Activated T-helper 1 cell treated with anti-CD3 and anti-CD28 coated beads, Interleukin-12 subunit alpha, Interleukin-12 subunit beta, Interleukin-2, Interleukin-4 antibody, amounts not matched to agents 30 ng/mL and 10 ng/mL and 1 ng/mL, durations not matched to agents 14 hours and 24 hours and 36 hours (primary cell): ENCODE measurements at regions of chr4 and their contacts with region 1.

Region 1: DNA sequence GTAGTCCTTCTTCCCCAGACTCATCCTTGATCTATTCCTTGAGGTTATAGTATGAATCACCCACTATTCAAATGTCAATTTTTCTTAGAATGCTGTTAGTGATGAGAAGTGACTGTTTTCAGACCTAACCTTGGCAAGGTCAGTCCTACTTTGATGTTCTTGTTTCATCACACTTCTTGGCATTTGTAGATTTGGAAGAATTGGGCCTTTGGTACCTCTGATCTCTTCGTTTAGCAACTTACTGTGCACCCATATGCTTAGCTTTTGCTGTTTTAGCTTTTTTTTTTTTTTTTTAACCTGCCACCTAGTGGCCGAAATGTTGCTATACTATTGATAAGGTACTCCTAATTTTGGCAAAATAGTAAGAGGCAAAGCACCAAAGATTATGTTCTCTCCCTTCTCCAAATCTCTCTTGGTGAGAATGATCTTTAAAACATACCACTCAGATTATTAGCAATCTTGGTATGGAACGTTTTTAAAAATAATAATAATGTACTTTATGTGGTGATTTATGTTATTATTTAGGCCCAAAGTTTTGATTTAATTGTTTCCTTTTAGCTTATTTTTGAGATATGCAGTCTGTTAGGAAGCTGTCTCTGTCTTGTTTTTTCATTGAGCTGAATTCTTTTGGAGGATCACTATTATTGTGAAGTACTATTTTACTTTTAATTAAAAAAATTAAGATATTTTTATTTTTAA is 16.6 kb downstream of the DCK start:
- DNase-seq: no peak
- H3K4me3 Mint-ChIP-seq: no peak overlapping the region
- H3K27ac Mint-ChIP-seq: peak overlapping the region; percentile 64
- H3K4me1 Mint-ChIP-seq: peaks cover 48% of the 10 kb centered on the region
- H3K27me3 Mint-ChIP-seq: no peaks in the 10 kb centered on the region

Region 2: DNA sequence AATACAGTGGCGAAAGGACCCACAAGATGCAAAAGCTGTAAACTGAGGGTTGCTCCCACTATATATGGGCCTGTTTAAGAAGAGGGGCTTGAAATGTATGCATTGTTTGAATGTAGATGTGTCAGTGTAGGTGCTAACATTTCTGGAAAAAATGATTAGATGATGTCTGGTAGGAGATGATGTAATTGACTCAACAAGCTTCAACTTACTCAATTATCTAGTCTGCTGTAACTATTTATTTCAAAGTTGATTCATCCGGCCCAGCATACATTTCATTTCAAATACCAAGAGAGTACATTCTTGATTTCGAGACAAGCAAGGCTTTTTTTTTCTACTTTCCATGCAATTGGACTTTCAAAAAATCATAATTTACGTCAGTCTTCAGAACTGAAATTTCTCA is 390.8 kb before region 1 on chr4:
- intact Hi-C with region 1: loop called (anchors 5 kb)
- DNase-seq: no peak
- H3K4me3 Mint-ChIP-seq: no peak overlapping the region
- H3K27ac Mint-ChIP-seq: peak overlapping the region; percentile 3
- H3K4me1 Mint-ChIP-seq: peaks cover 8% of the 10 kb centered on the region
- H3K27me3 Mint-ChIP-seq: peaks cover 6% of the 10 kb centered on the region

Region 3: DNA sequence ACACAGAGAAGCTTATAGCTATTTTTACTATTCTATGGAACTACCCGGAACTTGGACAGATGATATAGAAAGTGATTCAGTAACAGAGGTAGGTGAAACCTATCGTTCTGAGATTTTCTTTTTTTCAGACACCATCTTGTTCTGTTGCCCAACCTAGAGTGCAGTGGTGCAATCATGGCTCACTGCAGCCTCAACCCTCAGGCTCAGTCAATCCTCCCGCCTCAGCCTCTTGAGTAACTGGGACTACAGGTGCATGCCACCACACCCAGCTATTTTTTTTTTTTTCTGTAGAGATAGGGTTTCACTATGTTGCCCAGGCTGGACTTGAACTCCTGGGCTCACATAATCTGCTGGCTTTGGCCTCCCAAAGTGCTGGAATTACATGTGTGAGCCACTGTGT is 41.4 kb after region 1 on chr4:
- intact Hi-C with region 1: no loop called
- DNase-seq: no peak
- H3K4me3 Mint-ChIP-seq: no peak overlapping the region
- H3K27ac Mint-ChIP-seq: no peak overlapping the region
- H3K4me1 Mint-ChIP-seq: no peaks in the 10 kb centered on the region
- H3K27me3 Mint-ChIP-seq: no peaks in the 10 kb centered on the region